ENCODE measurements at regions of chr16 and their contacts with region 1.

Region 1: GRCh38 chr16:67521095-67521804 is 7.4 kb upstream of the RIPOR1 start:
- DNase-seq: peak; percentile 98
- H3K4me3 Mint-ChIP-seq: peak overlapping the region; percentile 73
- H3K27ac Mint-ChIP-seq: peak overlapping the region; percentile 73
- H3K4me1 Mint-ChIP-seq: peaks cover 15% of the 10 kb centered on the region
- H3K27me3 Mint-ChIP-seq: peaks cover 36% of the 10 kb centered on the region
- CTCF ChIP-seq: peak; percentile 90

Region 2: DNA sequence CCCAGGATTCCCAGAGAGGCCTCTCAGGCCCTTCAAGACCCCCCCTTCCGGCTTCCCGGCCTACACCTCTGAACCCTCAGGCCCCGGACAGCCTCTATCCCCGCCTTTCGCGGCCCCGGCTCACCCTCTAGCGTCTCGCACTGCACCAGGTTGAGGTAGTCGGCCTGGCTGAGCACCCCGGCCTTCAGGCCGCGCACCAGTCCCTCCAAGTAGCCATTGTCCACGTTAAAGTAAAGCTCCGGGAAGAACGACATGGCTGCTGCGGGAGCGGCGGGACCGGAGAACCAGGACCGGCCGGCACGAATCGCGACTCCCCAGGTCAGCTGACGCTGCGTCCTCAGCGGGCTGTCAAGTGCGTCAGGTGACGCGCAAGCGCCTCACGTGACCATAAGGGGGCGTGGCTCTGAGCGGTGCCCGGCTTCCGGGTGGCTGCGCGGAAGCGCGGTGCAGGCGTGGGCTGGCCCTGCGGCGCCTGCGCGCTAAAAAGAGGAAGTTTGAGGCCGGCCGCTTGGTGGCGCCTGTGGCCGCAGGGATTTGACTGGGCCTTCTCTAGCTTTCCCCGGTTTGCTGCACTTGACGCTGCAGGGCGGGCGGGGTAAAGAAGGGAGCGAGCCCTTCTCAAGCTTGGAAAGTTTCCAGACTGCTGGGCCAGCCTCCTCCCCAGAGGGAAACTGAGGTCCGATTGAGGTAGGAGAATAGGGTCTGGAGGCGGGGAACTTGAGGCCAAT is 40.3 kb before region 1 on chr16 and contains the start of gene ATP6V0D1:
- CTCF ChIA-PET with region 1: interaction called, 26 read pairs
- intact Hi-C with region 1: no loop called
- DNase-seq: peak; percentile 100
- H3K4me3 Mint-ChIP-seq: peak within 1 kb of the TSS; percentile 100
- H3K27ac Mint-ChIP-seq: peak within 1 kb of the TSS; percentile 99
- H3K4me1 Mint-ChIP-seq: peaks cover 10% of the 10 kb centered on the region
- H3K27me3 Mint-ChIP-seq: no peaks in the 10 kb centered on the region
- CTCF ChIP-seq: peak; percentile 82
- total RNA-seq, gene ATP6V0D1: 85.3 and 91.0 TPM in 2 replicates

Region 3: GRCh38 chr16:67546761-67547422 is 25.6 kb after region 1 on chr16:
- CTCF ChIA-PET with region 1: interaction called, 17 read pairs
- intact Hi-C with region 1: no loop called
- DNase-seq: peak; percentile 87
- H3K4me3 Mint-ChIP-seq: no peak overlapping the region
- H3K27ac Mint-ChIP-seq: peak overlapping the region; percentile 20
- H3K4me1 Mint-ChIP-seq: peaks cover 16% of the 10 kb centered on the region
- H3K27me3 Mint-ChIP-seq: no peaks in the 10 kb centered on the region
- CTCF ChIP-seq: peak; percentile 97

Region 4: DNA sequence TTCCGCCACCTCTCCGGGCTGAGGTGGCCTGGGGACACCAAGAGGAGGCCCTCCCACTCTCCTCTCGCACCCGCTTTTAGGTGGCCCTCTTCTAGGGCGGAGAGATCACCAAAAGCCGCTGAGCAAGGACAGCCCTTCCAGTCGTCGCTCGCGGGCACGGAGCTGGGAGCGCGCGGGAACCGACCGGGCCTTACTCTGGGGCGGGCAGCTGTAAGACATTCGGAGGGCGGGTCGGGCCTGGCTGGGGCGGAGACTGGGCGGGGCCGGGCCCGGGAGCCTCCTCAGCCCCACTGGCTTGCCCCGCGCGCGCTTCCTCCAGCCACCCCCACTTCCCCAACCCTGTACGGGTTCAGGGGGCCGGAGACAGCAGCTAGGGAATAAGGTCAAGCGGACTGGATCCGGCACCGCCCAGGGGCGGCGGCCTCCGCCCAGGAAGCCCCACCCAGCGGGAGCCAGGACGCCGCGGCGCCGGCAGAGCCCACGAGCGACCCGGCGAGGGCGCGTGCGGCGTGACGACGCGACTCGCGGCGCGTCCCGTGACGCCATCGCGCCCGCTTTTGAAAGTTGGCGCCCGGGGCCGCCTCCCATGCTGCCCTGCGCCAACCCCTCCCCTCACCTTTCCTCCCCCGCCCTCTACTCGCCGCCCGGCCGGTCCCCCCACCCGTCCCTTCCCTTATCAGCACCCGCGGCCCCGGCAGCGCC is 40.7 kb after region 1 on chr16:
- CTCF ChIA-PET with region 1: interaction called, 37 read pairs
- intact Hi-C with region 1: loop called (anchors 2 kb)
- DNase-seq: peak; percentile 97
- H3K4me3 Mint-ChIP-seq: peak overlapping the region; percentile 95
- H3K27ac Mint-ChIP-seq: peak overlapping the region; percentile 93
- H3K4me1 Mint-ChIP-seq: peaks cover 23% of the 10 kb centered on the region
- H3K27me3 Mint-ChIP-seq: no peaks in the 10 kb centered on the region
- CTCF ChIP-seq: no peak

Region 5: GRCh38 chr16:67660564-67661028 is 139.3 kb after region 1 on chr16 and contains the start of gene PARD6A:
- CTCF ChIA-PET with region 1: interaction called, 15 read pairs
- intact Hi-C with region 1: no loop called
- DNase-seq: peak; percentile 96
- H3K4me3 Mint-ChIP-seq: peak within 1 kb of the TSS; percentile 99
- H3K27ac Mint-ChIP-seq: peak within 1 kb of the TSS; percentile 96
- H3K4me1 Mint-ChIP-seq: no peaks in the 10 kb centered on the region
- H3K27me3 Mint-ChIP-seq: peaks cover 6% of the 10 kb centered on the region
- CTCF ChIP-seq: no peak
- total RNA-seq, gene PARD6A: 9.5 and 12.3 TPM in 2 replicates

Region 6: GRCh38 chr16:67672739-67673662 is 151.8 kb after region 1 on chr16:
- CTCF ChIA-PET with region 1: interaction called, 31 read pairs
- intact Hi-C with region 1: no loop called
- DNase-seq: peak; percentile 71
- H3K4me3 Mint-ChIP-seq: no peak overlapping the region
- H3K27ac Mint-ChIP-seq: peak overlapping the region; percentile 31
- H3K4me1 Mint-ChIP-seq: peaks cover 13% of the 10 kb centered on the region
- H3K27me3 Mint-ChIP-seq: no peaks in the 10 kb centered on the region
- CTCF ChIP-seq: peak; percentile 60

Region 7: GRCh38 chr16:67928561-67929364 is 407.5 kb after region 1 on chr16:
- CTCF ChIA-PET with region 1: interaction called, 4 read pairs
- intact Hi-C with region 1: loop called (anchors 5 kb)
- DNase-seq: peak; percentile 86
- H3K4me3 Mint-ChIP-seq: no peak overlapping the region
- H3K27ac Mint-ChIP-seq: no peak overlapping the region
- H3K4me1 Mint-ChIP-seq: no peaks in the 10 kb centered on the region
- H3K27me3 Mint-ChIP-seq: no peaks in the 10 kb centered on the region
- CTCF ChIP-seq: peak; percentile 83